Thyroid gland (tissue), 4 donors: ENCODE measurements at regions of chr10 and their contacts with region 1.

Region 1: GRCh38 chr10:102729029-102730026 is 14.4 kb upstream of the WBP1L start:
- DNase-seq: peak; percentile 90 to 91
- H3K4me3 ChIP-seq: no peak overlapping the region
- H3K27ac ChIP-seq: peak overlapping the region in 1 of 3 donors; percentile 79
- H3K4me1 ChIP-seq: peaks cover 18 to 32% of the 10 kb centered on the region in 2 donors
- H3K27me3 ChIP-seq: no peaks in the 10 kb centered on the region
- CTCF ChIP-seq: peak; percentile 77 to 94 (median 90)
- POLR2A ChIP-seq: no peak

Region 2: GRCh38 chr10:102835007-102835482 is 105.7 kb after region 1 on chr10:
- intact Hi-C with region 1: loop called (anchors 5 kb)
- DNase-seq: peak; percentile 83 to 85
- H3K4me3 ChIP-seq: no peak overlapping the region
- H3K27ac ChIP-seq: peak overlapping the region; percentile 17 to 91 (median 89)
- H3K4me1 ChIP-seq: peaks cover 26 to 30% of the 10 kb centered on the region in 2 donors
- H3K27me3 ChIP-seq: no peaks in the 10 kb centered on the region
- CTCF ChIP-seq: peak; percentile 69 to 95 (median 86)
- POLR2A ChIP-seq: no peak

Region 3: GRCh38 chr10:102904346-102904745 is 175.0 kb after region 1 on chr10:
- intact Hi-C with region 1: loop called (anchors 5 kb)
- DNase-seq: peak; percentile 51 to 57
- H3K4me3 ChIP-seq: no peak overlapping the region
- H3K27ac ChIP-seq: no peak overlapping the region
- H3K4me1 ChIP-seq: peaks cover 0 to 3% of the 10 kb centered on the region in 2 donors
- H3K27me3 ChIP-seq: no peaks in the 10 kb centered on the region
- CTCF ChIP-seq: no peak
- POLR2A ChIP-seq: no peak